Tibial artery (tissue), 4 donors: ENCODE measurements at regions of chr12 and their contacts with region 1.

Region 1: DNA sequence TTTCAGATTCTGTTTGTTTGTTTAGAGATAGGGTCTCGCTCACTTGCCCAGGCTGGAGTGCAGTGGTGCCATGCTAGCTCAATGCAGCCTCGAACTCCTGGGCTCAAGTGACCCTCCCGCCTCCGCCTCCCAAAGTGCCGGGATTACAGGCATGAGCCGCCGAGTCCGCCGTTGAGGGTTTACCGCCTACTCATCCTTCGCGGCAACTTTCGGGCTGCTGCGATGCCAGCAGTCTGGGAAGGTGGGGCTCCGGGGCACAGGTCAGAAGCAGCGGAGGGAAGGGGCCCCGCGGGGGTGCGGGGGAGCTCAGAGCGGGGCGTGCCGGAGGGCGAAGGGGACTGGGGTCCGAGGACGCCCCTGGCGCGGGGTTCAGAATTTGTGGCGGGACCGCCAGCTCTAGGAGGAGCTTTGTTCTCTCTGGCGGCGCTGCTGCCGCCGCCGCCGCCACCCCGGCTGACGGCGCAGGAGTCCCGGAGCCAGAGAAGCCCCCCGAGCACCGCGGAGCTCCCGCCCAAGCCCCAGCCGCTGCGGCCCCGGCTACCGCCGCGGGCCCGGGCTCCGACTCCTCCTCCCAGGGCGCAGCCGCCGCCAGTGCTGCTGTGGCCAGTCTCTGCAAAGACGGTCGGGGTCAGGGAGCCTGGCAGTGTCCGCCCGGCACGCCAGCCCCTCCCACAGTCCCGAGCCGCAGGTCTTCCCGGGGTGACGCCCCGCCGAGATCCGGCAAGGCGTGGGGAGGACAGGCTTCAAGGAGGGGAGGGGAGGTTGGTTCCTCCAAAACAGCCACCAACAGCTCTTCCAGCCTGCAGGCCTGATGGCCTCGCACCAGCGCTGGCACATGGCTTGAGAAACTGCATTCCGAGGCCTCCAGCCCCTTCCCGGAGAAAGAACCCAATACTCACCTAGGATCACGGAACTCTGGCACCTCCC is 10.9 kb upstream of the KRT77 start:
- DNase-seq: no peak
- H3K4me3 ChIP-seq: no peak overlapping the region
- H3K27ac ChIP-seq: no peak overlapping the region
- H3K4me1 ChIP-seq: peaks cover 0 to 10% (median 4%) of the 10 kb centered on the region in 4 donors
- H3K27me3 ChIP-seq: peaks cover 0 to 50% of the 10 kb centered on the region in 2 donors
- CTCF ChIP-seq: no peak

Region 2: DNA sequence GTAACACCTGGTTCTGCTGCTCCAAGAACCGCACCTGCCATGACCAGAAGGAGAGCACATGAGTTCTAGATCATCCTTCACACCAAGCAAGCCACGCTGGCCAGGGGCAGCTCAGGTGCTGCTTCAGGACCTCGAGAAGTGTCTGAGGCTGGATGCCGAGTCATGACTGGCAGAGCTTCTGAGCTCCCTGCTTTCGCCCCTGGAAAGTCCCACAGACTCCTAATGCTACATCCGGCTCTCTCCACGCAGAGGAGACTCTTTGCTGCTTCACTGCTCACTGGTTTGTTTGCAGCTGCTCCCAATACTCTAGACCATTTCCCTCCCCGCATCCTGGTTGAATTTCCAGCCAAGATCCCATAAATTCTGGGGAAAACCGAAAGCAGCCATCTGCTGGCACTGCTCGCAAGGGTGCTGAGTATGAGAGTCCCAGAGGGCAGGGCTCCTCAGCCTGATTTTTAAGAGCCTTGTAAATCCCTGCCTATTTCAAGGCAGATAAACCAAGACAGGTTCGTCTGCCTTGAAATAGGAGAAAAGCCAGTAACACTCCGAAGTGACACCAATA is 63.6 kb before region 1 on chr12:
- intact Hi-C with region 1: no loop called
- DNase-seq: no peak
- H3K4me3 ChIP-seq: peak overlapping the region in 1 of 2 donors; percentile 12
- H3K27ac ChIP-seq: no peak overlapping the region
- H3K4me1 ChIP-seq: peaks cover 0 to 7% (median 2%) of the 10 kb centered on the region in 4 donors
- H3K27me3 ChIP-seq: peaks cover 0 to 10% of the 10 kb centered on the region in 2 donors
- CTCF ChIP-seq: no peak

Region 3: DNA sequence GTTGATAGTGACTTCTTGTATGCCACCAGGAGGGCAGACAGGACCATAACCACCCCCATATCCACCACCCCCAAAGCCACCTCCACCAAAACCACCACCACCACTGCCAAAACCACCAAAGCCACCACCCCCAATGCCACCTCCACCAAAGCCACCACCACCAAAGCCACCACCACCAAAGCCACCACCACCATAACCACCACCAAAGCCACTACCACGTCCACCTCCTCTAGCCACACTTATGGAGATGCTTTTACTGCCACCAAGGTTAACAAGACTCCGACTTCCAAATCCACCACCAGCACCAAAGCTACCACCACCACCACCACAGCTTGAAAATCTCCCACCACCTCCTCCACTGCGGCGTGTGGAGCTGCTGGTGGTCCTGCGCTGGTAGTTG is 34.3 kb before region 1 on chr12:
- intact Hi-C with region 1: loop called (anchors 1 kb)
- DNase-seq: no peak
- H3K4me3 ChIP-seq: no peak overlapping the region
- H3K27ac ChIP-seq: no peak overlapping the region
- H3K4me1 ChIP-seq: no peaks in the 10 kb centered on the region
- H3K27me3 ChIP-seq: peaks cover 0 to 20% of the 10 kb centered on the region in 2 donors
- CTCF ChIP-seq: no peak

Region 4: DNA sequence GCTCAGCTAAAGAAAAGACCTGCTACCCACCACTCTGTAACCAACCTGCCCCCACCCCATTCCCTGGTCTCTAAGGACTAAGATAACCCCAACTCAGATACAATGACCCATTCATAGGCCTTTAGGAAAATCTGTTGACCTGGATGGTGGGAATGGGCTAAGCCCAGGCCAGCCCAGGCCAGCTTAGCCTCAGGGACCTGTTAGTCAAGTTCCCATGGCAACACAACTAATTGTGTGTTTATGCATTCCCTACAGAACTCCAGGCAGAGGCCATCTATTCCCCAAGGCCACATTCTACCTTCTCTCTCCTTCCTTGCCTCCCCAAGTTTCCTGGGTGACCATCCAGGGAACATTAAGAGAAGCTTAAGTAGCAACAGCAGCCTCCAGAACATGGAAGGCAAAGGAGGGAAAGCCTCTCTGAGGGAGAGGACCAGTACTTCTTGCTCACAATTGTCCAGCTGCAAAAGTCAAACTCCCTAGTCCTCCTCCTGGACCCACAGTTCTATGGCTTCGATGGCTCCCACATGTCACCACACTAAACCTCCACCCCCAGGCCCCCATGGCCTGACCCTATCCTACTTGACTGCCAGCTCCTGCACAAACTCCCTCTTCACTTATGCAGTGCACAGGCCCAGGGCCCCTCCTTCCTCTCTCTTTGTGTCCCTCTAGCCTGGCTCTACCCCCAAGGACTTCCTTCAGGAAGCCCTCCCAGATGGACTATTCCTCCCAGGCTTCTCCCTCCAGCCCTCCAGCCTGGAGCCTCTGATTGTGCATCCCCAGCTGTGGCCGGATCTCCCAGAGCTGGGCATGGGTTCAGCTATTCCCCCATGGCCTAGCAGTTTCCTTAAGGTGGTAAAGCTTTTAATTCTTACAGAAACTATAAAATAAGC is 207.0 kb after region 1 on chr12:
- intact Hi-C with region 1: no loop called
- DNase-seq: no peak
- H3K4me3 ChIP-seq: no peak overlapping the region
- H3K27ac ChIP-seq: no peak overlapping the region
- H3K4me1 ChIP-seq: peaks cover 0 to 17% (median 7%) of the 10 kb centered on the region in 4 donors
- H3K27me3 ChIP-seq: no peaks in the 10 kb centered on the region
- CTCF ChIP-seq: no peak